ENCODE measurements at regions of chr20 and their contacts with region 1.

Region 1: GRCh38 chr20:32762149-32762753 is at the start of gene DNMT3B:
- DNase-seq: peak; percentile 34
- H3K4me3 ChIP-seq: peak within 1 kb of the TSS; percentile 84
- H3K27ac ChIP-seq: no peak within 1 kb of the TSS
- H3K27me3 ChIP-seq: no peaks in the 10 kb centered on the region
- CTCF ChIP-seq: 0 out of 2 replicates have a peak, but pooled peaks have one; percentile 11
- polyA plus RNA-seq, gene DNMT3B: 1.8 and 1.9 TPM in 2 replicates

Region 2: GRCh38 chr20:32674362-32674789 is 87.9 kb before region 1 on chr20:
- CTCF ChIA-PET with region 1: interaction called, 14 read pairs
- POLR2A ChIA-PET with region 1: no interaction called
- DNase-seq: no peak
- H3K4me3 ChIP-seq: no peak overlapping the region
- H3K27ac ChIP-seq: no peak overlapping the region
- H3K27me3 ChIP-seq: no peaks in the 10 kb centered on the region
- CTCF ChIP-seq: peak; percentile 83

Region 3: DNA sequence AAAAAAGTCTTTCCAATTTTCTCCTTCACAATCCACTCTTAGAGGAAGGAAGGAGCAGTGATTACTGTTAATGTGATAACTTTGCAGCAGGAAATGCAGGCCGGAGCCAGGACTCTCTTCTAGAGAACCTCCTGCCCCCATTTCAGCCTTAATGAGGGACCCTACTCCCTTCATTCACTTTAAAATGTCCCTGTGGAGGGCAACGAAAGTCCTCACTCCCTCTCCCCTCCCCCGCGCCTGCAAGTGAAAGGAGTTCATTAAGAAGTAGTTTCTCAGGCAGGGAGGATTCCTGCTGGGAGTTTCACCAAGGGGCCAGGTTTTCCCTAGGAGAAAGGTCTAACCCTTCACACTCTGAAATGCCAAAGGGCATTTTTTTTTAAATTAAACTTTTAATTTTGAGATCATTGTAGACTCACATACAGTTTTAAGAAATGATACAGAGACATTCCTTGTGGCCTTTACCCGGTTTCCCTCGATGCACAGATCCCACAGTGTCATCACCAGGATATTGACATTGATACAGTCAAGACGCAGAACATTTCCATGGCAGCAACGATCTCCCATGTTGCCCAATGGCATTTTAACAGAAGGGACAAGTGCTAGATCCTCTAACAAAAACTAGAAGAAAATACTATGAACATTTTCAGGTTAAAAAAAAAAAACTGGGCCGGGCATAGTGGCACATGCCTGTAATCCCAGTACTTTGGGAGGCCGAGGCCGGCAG is 12.2 kb before region 1 on chr20:
- CTCF ChIA-PET with region 1: no interaction called
- POLR2A ChIA-PET with region 1: no interaction called
- DNase-seq: no peak
- H3K4me3 ChIP-seq: no peak overlapping the region
- H3K27ac ChIP-seq: no peak overlapping the region
- H3K27me3 ChIP-seq: no peaks in the 10 kb centered on the region
- CTCF ChIP-seq: no peak

Measured in AG04450 (cell line).